Lower leg skin (tissue), 4 donors: ENCODE measurements at regions of chr6 and their contacts with region 1.

Region 1: DNA sequence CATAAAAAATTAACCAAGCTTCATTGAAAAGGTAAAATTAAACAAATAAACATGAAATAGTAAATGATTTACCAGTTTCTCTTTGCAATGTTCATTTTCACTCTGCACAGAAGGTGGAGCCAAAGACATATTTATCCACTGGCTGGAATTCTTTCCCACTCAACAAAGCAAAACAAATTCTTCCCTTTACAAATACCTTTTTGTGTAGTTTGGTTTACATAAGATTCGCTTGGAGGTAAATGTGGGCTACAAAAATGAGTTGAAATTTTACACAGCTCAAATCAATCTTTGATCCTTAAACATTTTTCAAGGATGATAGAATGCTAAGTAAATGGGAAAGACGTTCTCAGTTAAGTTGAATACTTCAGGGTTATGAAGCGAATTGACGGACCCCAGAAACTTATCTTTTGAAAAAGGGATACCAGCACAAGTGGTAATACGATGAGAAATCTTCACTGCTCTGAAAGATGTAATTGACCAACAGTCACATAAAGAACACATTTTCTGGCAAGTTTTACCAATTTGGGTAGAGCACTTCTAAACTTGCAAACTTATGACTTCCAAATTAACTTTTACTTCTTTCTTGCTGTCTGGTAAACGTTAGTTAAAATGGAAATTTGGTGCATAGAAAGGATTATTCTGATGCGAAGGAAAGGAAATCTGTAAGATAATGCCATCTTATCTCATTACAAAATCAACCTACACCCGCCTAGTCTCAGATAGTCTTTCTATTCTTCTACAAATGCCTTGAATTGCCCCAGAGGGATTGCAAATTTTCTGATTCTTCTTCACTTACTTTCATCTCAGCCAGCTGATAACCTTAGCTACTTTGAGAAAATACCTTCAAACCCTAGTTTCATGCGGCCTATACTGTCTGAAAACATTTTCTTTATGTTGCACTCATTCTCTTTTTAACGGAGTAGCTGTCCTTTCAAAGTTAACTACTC is 4.7 kb upstream of the GJA1 start:
- DNase-seq: no peak
- H3K4me3 ChIP-seq: no peak overlapping the region
- CTCF ChIP-seq: peak in 1 of 3 donors; percentile 9
- POLR2A ChIP-seq: no peak

Region 2: DNA sequence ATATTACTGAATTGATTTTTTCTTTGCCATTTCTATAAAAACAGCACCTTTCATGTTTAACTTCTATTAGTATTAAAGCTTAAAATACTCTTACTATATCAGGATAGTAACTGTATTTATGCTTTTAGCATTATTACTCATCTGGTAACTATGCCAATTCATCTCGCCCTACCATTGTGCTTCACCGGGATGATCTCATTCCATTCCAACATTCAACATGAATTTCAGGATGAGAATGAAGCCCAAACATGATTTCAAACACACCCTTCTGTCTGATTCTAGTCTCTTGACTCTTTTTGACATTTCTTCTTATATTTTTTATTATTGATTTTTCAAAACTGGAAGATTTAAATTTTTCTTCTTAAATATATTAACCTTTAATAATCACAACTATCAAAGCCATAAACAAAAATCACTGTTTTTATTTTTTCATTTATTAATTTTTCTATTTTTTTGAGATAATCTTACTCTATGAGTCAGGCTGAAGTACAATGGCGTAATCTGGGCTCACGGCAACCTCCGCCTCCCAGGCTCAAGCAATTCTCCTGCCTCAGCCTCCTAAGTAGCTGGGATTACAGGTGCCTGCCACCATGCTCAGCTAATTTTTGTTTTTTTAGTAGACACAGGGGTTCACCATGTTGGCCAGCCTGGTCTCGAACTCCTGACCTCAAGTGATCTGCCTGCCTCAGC is 51.4 kb after region 1 on chr6:
- intact Hi-C with region 1: no loop called
- DNase-seq: no peak
- H3K4me3 ChIP-seq: no peak overlapping the region
- CTCF ChIP-seq: no peak
- POLR2A ChIP-seq: no peak

Region 3: GRCh38 chr6:121593011-121593690 is 162.4 kb after region 1 on chr6:
- intact Hi-C with region 1: loop called (anchors 10 kb)
- DNase-seq: peak in 1 of 2 donors; percentile 44
- H3K4me3 ChIP-seq: no peak overlapping the region
- CTCF ChIP-seq: no peak
- POLR2A ChIP-seq: no peak

Region 4: DNA sequence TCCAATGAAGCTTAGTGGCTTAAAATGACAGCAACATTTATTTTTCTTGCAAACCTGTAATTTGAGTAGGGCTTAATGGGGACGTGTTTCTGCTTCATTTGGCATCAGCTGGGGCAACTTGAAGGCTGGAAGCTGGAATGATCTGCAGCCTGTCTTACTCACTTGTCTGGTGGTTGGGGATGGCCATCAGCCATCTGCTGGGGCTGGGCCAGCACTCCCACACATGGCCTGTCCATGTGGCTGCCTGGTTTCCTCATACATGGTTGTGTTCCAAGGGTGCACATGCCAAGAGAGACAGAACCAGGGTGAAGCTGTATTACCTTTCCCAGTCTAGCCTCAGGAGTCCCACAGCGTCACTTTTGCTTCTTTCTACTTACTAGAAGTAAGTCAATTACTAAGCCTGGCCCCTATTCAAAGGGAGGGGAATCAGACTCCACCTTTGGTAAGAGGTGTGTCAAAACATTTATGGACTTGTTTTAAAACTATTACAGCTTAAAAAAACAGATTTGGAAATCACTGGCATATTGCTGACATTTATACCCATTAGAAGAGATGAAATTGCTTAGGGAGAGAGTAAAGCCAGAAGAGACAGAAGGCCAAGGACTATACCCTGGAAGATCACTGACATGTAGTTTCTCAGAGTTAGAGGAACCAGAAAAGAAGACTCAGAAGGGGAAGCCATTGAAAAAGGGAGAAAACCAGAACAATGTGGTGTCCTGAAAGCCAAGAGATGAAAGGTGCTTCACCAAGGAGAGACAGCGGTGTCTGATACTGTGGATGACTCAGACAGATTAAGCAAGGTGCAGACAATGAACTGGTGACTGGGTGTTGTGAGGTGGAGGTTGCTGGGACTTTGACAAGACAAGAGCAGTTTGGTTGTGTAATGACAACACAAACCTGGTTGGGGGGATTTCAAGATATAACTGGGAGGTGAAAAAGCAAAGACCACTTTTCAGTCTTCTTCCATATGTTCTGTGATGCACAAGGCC is 349.8 kb after region 1 on chr6:
- intact Hi-C with region 1: loop called (anchors 10 kb)
- DNase-seq: peak; percentile 90 to 96
- H3K4me3 ChIP-seq: no peak overlapping the region
- CTCF ChIP-seq: no peak
- POLR2A ChIP-seq: no peak

Region 5: DNA sequence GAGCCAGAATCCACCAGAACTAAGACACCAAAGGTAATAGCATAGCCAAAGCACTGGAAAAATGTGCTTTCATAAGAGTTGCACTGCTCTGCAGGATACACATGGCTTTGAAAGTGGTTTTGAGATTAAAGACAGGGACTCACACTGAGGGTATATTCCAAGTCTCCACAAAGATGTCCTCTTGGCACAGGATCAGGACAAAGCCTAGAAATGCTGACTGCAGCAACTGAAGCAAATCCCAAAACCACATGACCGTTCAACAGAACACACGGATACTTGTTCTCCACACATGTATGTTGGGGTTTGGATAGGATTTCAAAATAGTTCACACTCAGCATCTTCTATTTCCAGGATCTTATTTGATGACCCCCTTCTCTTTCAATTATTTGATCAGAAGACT is 604.4 kb after region 1 on chr6:
- intact Hi-C with region 1: loop called (anchors 5 kb)
- DNase-seq: no peak
- H3K4me3 ChIP-seq: no peak overlapping the region
- CTCF ChIP-seq: no peak
- POLR2A ChIP-seq: no peak

Region 6: DNA sequence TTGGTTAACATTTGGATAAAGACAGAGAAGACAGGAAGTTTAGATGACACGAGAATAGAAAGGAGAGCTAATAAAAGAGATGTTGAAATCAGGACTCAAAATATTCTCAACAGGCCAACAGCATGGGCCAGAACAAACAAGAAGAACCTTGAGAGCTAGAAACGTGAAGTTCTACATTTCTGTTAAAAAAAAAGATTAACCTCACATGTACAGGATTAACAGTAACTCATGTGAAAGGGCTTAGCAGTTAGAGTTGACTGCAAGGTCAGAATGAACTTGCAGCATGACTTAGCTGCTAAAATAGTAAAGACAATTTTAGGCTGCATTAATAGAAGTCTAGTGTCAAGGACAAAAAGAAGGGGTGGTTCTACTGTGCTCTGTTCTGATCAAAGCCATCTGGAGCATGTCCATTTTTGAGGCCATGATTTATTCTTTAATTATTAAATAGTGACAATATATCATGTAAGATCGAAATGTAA is 637.5 kb after region 1 on chr6:
- intact Hi-C with region 1: no loop called
- DNase-seq: no peak
- H3K4me3 ChIP-seq: no peak overlapping the region
- CTCF ChIP-seq: no peak
- POLR2A ChIP-seq: no peak

Region 7: DNA sequence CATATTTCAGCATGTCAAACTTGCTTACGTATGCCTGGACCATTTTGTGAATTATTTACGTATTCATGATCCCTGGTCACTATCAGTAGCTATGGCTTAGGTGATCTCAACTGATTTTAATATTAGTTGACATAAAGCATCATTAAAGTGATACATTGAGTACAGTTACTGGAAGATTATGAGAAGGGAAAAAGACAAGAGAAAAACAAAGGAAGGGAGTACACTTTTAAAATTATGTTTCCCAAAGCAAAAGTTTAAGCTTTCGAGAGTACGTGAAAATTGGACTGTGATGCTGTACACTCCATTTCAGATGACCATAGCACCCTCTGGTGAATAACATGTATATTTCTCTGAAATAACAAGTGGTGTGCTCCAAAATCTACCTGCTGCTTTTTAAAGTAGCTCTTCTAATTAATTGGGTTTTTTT is 753.6 kb after region 1 on chr6:
- intact Hi-C with region 1: loop called (anchors 5 kb)
- DNase-seq: no peak
- H3K4me3 ChIP-seq: no peak overlapping the region
- CTCF ChIP-seq: no peak
- POLR2A ChIP-seq: no peak